Head of caudate nucleus (tissue), 42 donors: ENCODE measurements at regions of chr15 and their contacts with region 1.

Region 1: DNA sequence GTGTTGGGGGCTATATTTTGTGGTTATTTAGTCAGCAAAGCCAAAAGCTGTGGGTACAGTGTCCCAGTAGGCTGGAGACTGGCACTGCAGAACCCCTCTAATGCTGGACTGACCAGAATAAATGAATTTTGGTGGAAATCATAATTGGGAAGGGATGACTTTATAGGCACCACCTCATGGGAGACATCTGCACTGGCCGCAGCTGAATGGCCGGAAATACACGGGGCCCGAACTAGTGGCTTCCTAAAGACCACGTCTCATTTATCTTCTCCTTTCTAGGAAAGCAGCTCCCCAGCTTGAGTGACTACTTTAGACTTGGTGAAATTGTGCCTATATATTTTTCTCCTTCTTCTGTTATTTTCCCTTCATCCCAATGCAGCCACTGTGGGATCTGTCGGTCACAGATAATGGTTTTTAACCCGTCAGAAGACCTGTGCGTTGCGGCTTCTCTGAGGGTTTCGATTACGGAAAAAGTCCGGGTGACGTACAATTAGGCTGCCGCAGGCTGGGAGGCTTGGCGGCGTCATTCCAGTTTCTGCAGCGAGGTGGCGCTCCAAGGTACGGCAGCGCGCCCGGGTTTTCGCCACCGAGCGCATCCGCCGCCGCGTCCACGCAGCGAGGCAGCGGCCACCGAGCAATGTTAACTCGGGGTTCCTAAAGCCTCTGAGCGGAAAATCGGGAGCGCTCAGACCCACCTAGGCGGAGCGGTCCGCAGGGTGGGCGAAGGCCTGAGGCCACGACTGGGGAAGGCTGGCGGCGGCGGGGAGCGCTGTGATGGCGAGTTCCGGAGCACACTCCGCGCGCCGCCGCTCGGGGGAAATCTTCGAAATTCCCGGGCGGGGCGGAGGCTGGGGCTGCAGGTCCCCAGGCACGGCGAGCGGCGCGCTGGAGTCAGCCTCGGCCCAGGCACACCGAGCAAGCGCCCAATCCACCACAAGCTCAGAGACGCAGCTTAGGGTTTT is 26.3 kb downstream of the NR2F2 start:
- DNase-seq: peak; percentile 46 to 89 (median 77)

Region 2: GRCh38 chr15:97234851-97235610 is 878.3 kb after region 1 on chr15:
- intact Hi-C with region 1: loop called (anchors 10 kb)
- DNase-seq: peak in 40 of 42 donors; percentile 21 to 80 (median 49)

Region 3: GRCh38 chr15:97759363-97759762 is 1402.6 kb after region 1 on chr15:
- intact Hi-C with region 1: loop called (anchors 10 kb)
- DNase-seq: no peak